K562 (cell line): ENCODE measurements at regions of chr10 and their contacts with region 1.

Region 1: GRCh38 chr10:108544494-108545120 is 1378.7 kb downstream of the XPNPEP1 start:
- DNase-seq: peak in 2 of 4 experiments; percentile 4 to 35
- ATAC-seq: peak; percentile 45; the same call in 2 of the 3 replicates
- H3K4me3 ChIP-seq: no peak overlapping the region
- H3K27ac ChIP-seq: no peak overlapping the region
- H3K4me1 ChIP-seq: no peaks in the 10 kb centered on the region
- H3K27me3 ChIP-seq: no peaks in the 10 kb centered on the region
- CTCF ChIP-seq: peak; percentile 38 to 59 (median 45)
- EP300 ChIP-seq: no peak
- POLR2A ChIP-seq: no peak
- RAD21 ChIP-seq: peak; percentile 44 to 58; a peak in 3 of 4 replicates

Region 2: DNA sequence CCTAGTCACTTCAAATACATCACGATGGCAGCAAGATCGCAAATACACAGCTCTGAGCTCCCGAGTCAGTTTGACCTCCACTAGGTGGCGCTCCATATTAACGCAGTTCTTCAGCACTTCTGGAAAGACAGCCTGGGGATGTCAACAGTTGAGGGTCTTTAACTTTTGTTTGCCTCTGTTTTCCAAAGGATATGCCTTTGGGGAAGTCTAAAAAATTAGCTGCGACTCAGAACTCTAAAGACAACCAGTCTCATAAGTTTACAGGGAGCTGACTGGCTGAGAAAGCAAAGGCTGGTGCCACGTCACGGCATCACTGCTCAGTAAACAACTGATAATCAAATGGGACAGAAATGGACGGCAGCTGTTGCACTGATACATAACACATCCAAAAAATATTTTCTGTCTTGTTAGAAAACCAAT is 1838.9 kb before region 1 on chr10:
- CTCF ChIA-PET with region 1: no interaction called
- POLR2A ChIA-PET with region 1: no interaction called
- in situ Hi-C with region 1: no loop called
- intact Hi-C with region 1: loop called (anchors 5 kb)
- DNase-seq: peak; percentile 21 to 71 (median 32)
- ATAC-seq: peak; percentile 83
- H3K4me3 ChIP-seq: no peak overlapping the region
- H3K27ac ChIP-seq: no peak overlapping the region
- H3K4me1 ChIP-seq: no peaks in the 10 kb centered on the region
- H3K27me3 ChIP-seq: no peaks in the 10 kb centered on the region
- CTCF ChIP-seq: peak; percentile 60 to 72 (median 62)
- EP300 ChIP-seq: no peak
- POLR2A ChIP-seq: no peak
- RAD21 ChIP-seq: peak; percentile 58 to 66